Heart left ventricle (tissue), 16 donors: ENCODE measurements at regions of chr5 and their contacts with region 1.

Region 1: DNA sequence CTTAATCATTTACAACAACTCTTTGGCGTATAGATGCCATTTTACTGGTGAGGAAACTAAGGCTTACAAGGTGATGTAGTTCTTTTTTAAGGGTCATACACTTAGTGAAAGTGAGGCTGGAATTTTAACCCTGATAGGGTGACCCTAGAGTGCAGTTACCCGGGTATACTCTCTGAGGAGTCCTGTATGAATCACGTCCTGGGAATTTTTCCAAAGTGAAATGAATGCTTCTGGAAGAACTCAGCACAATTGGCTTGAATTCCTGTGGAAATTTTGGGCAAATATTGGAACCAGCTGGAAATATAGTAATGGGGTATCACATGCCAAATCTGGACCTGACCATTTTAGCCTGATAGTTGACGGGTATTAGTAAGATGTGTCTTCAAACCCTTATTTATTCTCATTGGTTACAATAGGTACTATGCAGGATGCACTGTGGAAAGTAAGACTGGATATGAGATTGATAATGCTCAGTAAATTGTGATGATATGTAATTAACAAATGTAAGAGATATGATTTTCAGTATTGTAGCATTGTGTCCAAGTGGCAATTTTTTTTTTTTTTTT is 14.8 kb downstream of the SUB1 start:
- DNase-seq: peak in 1 of 5 donors; percentile 17
- ATAC-seq: peak; percentile 50 to 83 (median 78)
- H3K4me3 ChIP-seq: no peak overlapping the region
- H3K27ac ChIP-seq: peak overlapping the region in 10 of 12 donors; percentile 8 to 52 (median 23)
- H3K4me1 ChIP-seq: peaks cover 0 to 61% (median 31%) of the 10 kb centered on the region in 12 donors
- H3K27me3 ChIP-seq: no peaks in the 10 kb centered on the region
- CTCF ChIP-seq: no peak
- POLR2A ChIP-seq: no peak

Region 2: DNA sequence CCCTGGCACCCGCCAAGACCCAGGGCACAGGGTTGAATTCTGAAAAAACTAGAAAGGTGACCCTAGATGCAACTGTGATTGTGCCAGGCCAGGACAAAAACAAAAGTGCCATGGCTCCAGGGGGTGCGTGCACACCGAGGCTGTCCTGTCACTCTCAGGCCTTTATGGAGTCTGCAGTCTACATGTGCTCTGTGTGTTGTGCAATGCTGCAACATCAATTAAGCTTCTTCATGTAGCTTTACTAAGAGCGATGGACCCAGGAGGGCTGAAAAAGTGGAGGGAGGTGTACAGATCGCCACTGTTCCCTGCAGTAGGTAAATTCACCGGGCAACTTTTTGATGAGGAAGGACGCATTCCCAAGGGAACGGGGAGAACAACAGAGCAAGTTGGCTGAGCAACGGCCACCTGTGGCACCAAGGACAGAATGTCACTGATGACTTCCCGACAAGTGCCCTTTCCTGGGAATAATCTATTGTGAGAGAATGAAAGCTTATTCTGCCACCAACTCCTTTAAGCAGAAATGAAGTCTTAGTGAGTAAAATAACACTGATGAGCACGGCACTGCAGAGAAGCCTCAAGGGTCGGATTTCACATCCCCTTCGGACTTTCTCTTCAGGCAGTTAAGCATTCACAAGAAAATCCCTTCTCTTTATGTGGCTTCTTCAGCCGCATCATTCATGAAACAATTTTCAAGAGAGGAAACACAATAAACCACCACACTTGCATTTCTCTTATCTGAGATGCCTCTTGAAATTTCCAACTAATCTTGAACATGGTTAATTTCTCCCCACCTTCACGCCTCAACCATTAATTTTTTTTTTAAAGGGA is 1217.9 kb before region 1 on chr5:
- intact Hi-C with region 1: no loop called
- DNase-seq: no peak
- ATAC-seq: no peak
- H3K4me3 ChIP-seq: no peak overlapping the region
- H3K27ac ChIP-seq: no peak overlapping the region
- H3K4me1 ChIP-seq: no peaks in the 10 kb centered on the region
- H3K27me3 ChIP-seq: peaks cover 0 to 6% (median 0%) of the 10 kb centered on the region in 9 donors
- CTCF ChIP-seq: no peak
- POLR2A ChIP-seq: no peak

Region 3: DNA sequence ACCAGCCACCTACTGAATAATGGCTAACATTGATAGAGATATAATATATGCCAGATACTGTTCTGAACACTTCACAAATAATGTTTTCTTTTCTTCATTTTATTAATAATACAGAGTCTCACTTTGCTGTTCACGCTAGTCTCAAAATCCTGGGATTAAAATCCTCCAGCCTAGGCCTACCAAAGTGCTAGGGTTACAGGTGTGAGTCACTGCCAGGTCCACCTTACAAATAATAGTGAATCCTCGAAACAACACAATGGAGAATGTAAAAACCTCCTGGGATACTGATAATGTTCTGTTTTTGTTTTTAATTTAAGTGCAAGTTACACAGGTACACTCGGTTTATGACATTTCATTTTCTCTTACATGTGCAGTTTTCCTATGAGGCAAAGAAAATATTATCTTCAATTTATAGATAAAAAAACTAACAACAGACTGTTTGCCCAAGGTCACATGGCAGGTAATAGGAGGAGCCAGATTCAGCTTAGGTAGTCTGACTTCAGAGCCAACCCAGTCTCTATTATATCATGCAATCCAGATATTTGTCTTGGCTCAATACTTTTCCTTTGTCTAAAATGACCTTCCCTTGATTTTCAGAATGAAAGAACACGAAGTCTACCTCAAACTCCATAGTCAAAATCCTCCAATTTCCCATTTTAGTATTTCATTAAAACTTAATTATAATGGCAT is 163.4 kb before region 1 on chr5:
- intact Hi-C with region 1: loop called in 1 of 10 experiments (anchors 5 kb)
- DNase-seq: no peak
- ATAC-seq: peak in 1 of 4 donors; percentile 48
- H3K4me3 ChIP-seq: no peak overlapping the region
- H3K27ac ChIP-seq: no peak overlapping the region
- H3K4me1 ChIP-seq: peaks cover 0 to 69% (median 33%) of the 10 kb centered on the region in 12 donors
- H3K27me3 ChIP-seq: no peaks in the 10 kb centered on the region
- CTCF ChIP-seq: no peak
- POLR2A ChIP-seq: no peak

Region 4: GRCh38 chr5:32572778-32573480 is 27.2 kb before region 1 on chr5:
- intact Hi-C with region 1: no loop called
- DNase-seq: no peak
- ATAC-seq: no peak
- H3K4me3 ChIP-seq: no peak overlapping the region
- H3K27ac ChIP-seq: no peak overlapping the region
- H3K4me1 ChIP-seq: no peaks in the 10 kb centered on the region
- H3K27me3 ChIP-seq: no peaks in the 10 kb centered on the region
- CTCF ChIP-seq: no peak
- POLR2A ChIP-seq: no peak

Region 5: GRCh38 chr5:32734827-32735378 is 134.8 kb after region 1 on chr5:
- intact Hi-C with region 1: no loop called
- DNase-seq: no peak
- ATAC-seq: peak in 3 of 4 donors; percentile 34 to 49 (median 43)
- H3K4me3 ChIP-seq: no peak overlapping the region
- H3K27ac ChIP-seq: peak overlapping the region in 2 of 12 donors; percentile 1 to 35
- H3K4me1 ChIP-seq: peaks cover 0 to 29% (median 1%) of the 10 kb centered on the region in 12 donors
- H3K27me3 ChIP-seq: no peaks in the 10 kb centered on the region
- CTCF ChIP-seq: no peak
- POLR2A ChIP-seq: no peak

Region 6: GRCh38 chr5:32859211-32859641 is 259.1 kb after region 1 on chr5:
- intact Hi-C with region 1: no loop called
- DNase-seq: no peak
- ATAC-seq: no peak
- H3K4me3 ChIP-seq: no peak overlapping the region
- H3K27ac ChIP-seq: no peak overlapping the region
- H3K4me1 ChIP-seq: no peaks in the 10 kb centered on the region
- H3K27me3 ChIP-seq: no peaks in the 10 kb centered on the region
- CTCF ChIP-seq: no peak
- POLR2A ChIP-seq: no peak